Activated naive CD8-positive, alpha-beta T cell treated with anti-CD3 and anti-CD28 coated beads, Interleukin-2, amount 10 ng/mL, durations not matched to agents 7 days and 5 days (primary cell): ENCODE measurements at regions of chr6 and their contacts with region 1.

Region 1: DNA sequence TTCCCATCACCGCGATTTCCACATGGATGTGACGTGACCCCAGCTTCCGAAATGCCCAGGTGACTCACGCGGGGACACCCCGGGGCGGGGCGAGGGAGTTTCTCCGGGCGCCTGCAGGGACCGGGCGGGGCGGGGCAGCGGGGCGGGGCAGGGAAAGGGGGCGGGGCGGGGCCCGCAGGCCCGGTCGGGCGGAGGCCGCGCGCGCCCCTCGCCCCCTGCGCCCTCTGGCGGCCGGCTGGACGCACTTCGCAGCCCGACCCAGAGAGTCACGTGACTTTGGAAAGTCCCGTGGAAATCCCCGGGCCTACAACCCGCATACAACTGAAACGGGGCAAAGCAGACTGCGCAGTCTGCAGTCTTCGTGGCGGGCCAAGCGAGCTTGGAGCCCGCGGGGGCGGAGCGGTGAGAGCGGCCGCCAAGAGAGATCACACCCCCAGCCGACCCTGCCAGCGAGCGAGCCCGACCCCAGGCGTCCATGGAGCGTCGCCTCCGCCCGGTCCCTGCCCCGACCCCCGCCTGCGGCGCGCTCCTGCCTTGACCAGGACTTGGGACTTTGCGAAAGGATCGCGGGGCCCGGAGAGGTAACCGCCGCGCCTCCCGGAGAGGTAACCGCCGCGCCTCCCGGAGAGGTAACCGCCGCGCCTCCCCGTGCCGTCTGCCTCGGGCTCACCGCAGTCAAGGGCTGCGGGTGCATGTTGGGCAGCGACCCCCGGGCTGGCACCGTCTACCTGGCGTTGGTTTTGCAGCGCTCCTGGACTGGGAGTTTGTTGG is at the start of gene TNFAIP3:
- DNase-seq: peak; percentile 97
- ATAC-seq: peak; percentile 80
- H3K4me3 Mint-ChIP-seq: peak within 1 kb of the TSS; percentile 90
- H3K27ac Mint-ChIP-seq: peak within 1 kb of the TSS; percentile 95
- H3K4me1 Mint-ChIP-seq: peaks cover 46% of the 10 kb centered on the region
- H3K27me3 Mint-ChIP-seq: no peaks in the 10 kb centered on the region
- total RNA-seq, gene TNFAIP3: 88.6 to 89.5 TPM

Region 2: GRCh38 chr6:137707590-137708360 is 159.3 kb before region 1 on chr6:
- POLR2A ChIA-PET with region 1: interaction called, 16 read pairs
- DNase-seq: peak; percentile 72
- ATAC-seq: peak; percentile 73
- H3K4me3 Mint-ChIP-seq: peak overlapping the region; percentile 74
- H3K27ac Mint-ChIP-seq: peak overlapping the region; percentile 90
- H3K4me1 Mint-ChIP-seq: peaks cover 45% of the 10 kb centered on the region
- H3K27me3 Mint-ChIP-seq: no peaks in the 10 kb centered on the region

Region 3: GRCh38 chr6:137799950-137800568 is 67.0 kb before region 1 on chr6:
- POLR2A ChIA-PET with region 1: interaction called, 35 read pairs
- DNase-seq: no peak
- ATAC-seq: peak; percentile 81
- H3K4me3 Mint-ChIP-seq: no peak overlapping the region
- H3K27ac Mint-ChIP-seq: peak overlapping the region; percentile 59
- H3K4me1 Mint-ChIP-seq: peaks cover 50% of the 10 kb centered on the region
- H3K27me3 Mint-ChIP-seq: no peaks in the 10 kb centered on the region

Region 4: GRCh38 chr6:137823826-137824555 is 43.1 kb before region 1 on chr6:
- POLR2A ChIA-PET with region 1: interaction called, 18 read pairs
- DNase-seq: peak; percentile 64
- ATAC-seq: peak; percentile 69
- H3K4me3 Mint-ChIP-seq: peak overlapping the region; percentile 77
- H3K27ac Mint-ChIP-seq: peak overlapping the region; percentile 95
- H3K4me1 Mint-ChIP-seq: peaks cover 61% of the 10 kb centered on the region
- H3K27me3 Mint-ChIP-seq: no peaks in the 10 kb centered on the region

Region 5: DNA sequence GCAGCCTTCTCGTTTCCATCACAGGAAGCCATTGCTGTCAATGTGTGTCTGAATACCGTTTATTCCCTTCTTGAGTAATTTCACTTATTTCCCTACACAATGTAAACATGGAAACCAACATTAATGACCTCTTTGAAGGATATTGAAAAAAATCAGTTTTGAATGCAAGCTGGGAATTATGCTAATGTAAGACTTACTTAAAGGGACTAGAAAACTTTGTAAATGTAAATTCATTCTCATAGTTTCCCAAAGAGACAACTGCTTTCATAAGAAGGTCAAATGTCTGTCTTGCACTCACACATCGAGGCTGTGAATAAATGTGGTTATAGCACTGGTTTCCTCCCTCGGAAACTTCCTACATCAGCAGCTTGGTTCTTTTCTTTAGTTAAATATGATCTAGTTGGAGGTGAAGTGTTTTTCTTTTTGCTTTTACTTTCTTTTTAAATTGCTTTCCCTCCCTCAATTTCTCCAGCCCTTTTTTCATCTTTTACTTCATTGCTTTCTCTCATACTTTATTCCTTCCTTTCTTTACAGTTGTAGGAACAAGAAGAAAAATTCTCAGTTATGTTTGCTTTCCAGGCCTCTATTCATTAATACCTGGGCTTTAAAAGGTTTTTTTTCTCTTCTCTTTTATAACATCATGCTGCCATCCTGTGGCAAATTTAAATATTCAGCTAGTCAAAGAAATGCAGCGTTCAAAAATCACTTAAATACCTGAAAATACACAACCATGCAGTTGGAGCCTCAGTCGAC is 108.3 kb after region 1 on chr6:
- POLR2A ChIA-PET with region 1: interaction called, 11 read pairs
- DNase-seq: no peak
- ATAC-seq: peak; percentile 81
- H3K4me3 Mint-ChIP-seq: peak overlapping the region; percentile 81
- H3K27ac Mint-ChIP-seq: peak overlapping the region; percentile 90
- H3K4me1 Mint-ChIP-seq: peaks cover 38% of the 10 kb centered on the region
- H3K27me3 Mint-ChIP-seq: no peaks in the 10 kb centered on the region